Activated naive CD4-positive, alpha-beta T cell treated with anti-CD3 and anti-CD28 coated beads for 36 hours (primary cell): ENCODE measurements at regions of chr18 and their contacts with region 1.

Region 1: DNA sequence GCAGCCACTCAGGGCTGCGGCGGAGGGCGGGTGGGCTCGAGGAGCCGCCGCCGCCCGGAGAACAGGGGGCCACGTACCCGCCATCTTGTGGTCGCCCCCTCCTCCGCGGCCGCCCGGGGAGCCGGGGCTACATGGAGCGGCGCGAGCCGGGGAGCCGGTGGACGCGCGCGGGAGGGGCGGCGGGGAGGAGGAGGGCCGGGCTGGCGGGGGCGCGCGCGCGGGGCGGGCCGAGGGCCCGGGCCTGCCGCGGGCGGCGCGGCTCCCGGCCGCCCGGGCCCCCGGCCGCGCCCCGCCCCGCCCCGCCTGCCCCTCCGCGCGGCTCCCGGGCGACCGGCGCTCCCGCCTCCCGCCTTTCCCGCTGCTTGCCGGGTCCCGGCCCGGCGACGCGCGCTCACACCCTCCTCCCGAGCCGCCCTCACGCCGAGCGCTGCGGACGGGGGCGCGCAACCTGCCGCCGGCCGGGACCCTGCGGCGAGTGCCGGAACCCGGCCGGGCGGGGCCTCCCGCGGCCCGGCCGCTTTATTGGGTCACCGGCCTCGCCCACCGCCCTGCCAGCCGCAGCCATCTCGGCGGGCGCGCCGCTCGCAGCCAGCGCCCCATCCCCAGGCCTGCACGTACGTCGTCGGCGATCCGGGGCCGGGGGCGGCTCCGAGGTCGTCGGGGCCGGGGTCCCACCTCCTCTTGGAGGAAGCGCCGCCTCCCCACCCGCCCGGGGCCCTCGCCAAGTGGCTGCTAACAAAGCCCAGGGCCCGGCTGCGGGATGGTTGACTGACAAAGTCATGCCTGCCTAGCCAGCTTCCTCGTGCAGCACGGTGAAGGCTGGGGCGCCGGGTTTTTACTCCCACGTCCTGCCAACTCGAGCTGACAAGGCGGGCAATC is at the start of gene PPP4R1:
- DNase-seq: peak; percentile 71
- H3K4me3 Mint-ChIP-seq: peak within 1 kb of the TSS; percentile 93
- H3K27ac Mint-ChIP-seq: peak within 1 kb of the TSS; percentile 77
- H3K4me1 Mint-ChIP-seq: peaks cover 29% of the 10 kb centered on the region
- H3K27me3 Mint-ChIP-seq: no peaks in the 10 kb centered on the region
- total RNA-seq, gene PPP4R1: 23.0 to 23.6 TPM

Region 2: DNA sequence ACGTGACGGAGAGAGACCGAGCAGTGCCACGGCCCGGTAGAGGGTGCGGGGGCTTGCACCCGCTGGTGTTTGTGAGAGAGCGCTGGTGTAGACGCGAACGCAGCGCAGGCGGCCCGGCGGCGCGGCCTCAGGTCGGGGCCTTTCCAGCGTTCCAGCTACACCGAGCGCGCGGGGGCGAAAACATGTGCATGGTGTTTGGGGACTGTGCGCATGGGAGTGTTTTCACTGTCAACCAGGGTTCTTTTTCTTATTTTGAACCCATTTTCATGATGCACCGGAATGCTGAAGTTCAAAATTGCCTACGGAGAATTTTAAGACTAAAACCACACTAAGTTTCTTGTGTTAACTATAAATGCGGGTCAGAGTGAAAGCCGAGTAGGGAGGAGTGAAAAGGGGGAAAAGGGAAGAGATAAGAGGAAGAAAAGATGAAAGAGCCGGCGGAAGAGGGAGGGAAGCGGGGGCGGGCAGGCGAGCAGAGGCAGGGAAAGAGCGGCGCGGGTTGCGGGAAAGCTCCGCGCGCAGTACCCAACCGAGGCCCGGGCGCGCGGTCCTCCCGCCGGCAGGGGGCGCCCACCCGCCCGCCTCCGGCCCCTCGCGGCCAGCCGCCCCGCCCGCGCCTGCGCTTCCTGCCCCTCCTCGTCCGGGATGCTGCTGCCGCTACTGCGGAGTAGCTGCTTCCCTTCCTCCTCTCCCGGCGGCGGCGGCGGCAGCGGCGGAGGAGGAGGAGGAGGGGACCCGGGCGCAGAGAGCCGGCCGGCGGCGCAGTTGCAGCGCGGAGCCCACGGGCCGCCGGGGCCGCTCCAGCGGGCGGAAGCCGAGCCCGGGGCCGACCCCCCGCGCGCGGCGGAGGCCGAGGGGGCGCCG is 1005.6 kb before region 1 on chr18 and contains the start of gene RAB12:
- CTCF ChIA-PET with region 1: no interaction called
- intact Hi-C with region 1: loop called (anchors 5 kb)
- DNase-seq: peak; percentile 87
- H3K4me3 Mint-ChIP-seq: peak within 1 kb of the TSS; percentile 89
- H3K27ac Mint-ChIP-seq: peak within 1 kb of the TSS; percentile 91
- H3K4me1 Mint-ChIP-seq: peaks cover 47% of the 10 kb centered on the region
- H3K27me3 Mint-ChIP-seq: no peaks in the 10 kb centered on the region
- total RNA-seq, gene RAB12: 11.0 to 11.9 TPM

Region 3: GRCh38 chr18:9102508-9103375 is 511.9 kb before region 1 on chr18 and contains the start of gene NDUFV2:
- CTCF ChIA-PET with region 1: no interaction called
- intact Hi-C with region 1: loop called (anchors 5 kb)
- DNase-seq: peak; percentile 98
- H3K4me3 Mint-ChIP-seq: peak within 1 kb of the TSS; percentile 81
- H3K27ac Mint-ChIP-seq: peak within 1 kb of the TSS; percentile 95
- H3K4me1 Mint-ChIP-seq: peaks cover 43% of the 10 kb centered on the region
- H3K27me3 Mint-ChIP-seq: no peaks in the 10 kb centered on the region
- total RNA-seq, gene NDUFV2: 290 to 303 TPM

Region 4: GRCh38 chr18:9474983-9475642 is 139.5 kb before region 1 on chr18 and contains the start of gene RALBP1:
- CTCF ChIA-PET with region 1: no interaction called
- intact Hi-C with region 1: loop called (anchors 1 kb)
- DNase-seq: peak; percentile 99
- H3K4me3 Mint-ChIP-seq: peak within 1 kb of the TSS; percentile 89
- H3K27ac Mint-ChIP-seq: peak within 1 kb of the TSS; percentile 90
- H3K4me1 Mint-ChIP-seq: peaks cover 26% of the 10 kb centered on the region
- H3K27me3 Mint-ChIP-seq: peaks cover 3% of the 10 kb centered on the region
- total RNA-seq, gene RALBP1: 46.9 to 51.1 TPM

Region 5: DNA sequence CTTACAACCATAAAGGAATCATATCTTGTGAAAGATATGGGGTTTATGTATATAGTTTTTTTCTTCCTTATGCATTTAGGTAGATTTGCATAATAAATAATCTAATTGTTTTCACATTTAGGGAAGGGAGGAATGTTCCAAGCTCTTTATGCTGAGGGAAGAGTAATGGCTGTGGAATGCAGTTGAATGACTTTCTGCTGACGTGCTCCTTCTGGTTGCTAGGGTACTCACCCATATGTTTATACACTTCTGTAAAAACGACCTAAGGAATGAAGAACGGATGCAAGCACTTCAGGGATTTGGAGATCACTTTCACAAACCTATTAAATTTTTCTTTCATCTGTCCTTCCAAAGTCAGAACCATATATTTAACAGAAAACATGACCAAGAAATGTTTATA is 28.9 kb after region 1 on chr18:
- CTCF ChIA-PET with region 1: no interaction called
- intact Hi-C with region 1: no loop called
- DNase-seq: no peak
- H3K4me3 Mint-ChIP-seq: no peak overlapping the region
- H3K27ac Mint-ChIP-seq: no peak overlapping the region
- H3K4me1 Mint-ChIP-seq: no peaks in the 10 kb centered on the region
- H3K27me3 Mint-ChIP-seq: peaks cover 4% of the 10 kb centered on the region

Region 6: DNA sequence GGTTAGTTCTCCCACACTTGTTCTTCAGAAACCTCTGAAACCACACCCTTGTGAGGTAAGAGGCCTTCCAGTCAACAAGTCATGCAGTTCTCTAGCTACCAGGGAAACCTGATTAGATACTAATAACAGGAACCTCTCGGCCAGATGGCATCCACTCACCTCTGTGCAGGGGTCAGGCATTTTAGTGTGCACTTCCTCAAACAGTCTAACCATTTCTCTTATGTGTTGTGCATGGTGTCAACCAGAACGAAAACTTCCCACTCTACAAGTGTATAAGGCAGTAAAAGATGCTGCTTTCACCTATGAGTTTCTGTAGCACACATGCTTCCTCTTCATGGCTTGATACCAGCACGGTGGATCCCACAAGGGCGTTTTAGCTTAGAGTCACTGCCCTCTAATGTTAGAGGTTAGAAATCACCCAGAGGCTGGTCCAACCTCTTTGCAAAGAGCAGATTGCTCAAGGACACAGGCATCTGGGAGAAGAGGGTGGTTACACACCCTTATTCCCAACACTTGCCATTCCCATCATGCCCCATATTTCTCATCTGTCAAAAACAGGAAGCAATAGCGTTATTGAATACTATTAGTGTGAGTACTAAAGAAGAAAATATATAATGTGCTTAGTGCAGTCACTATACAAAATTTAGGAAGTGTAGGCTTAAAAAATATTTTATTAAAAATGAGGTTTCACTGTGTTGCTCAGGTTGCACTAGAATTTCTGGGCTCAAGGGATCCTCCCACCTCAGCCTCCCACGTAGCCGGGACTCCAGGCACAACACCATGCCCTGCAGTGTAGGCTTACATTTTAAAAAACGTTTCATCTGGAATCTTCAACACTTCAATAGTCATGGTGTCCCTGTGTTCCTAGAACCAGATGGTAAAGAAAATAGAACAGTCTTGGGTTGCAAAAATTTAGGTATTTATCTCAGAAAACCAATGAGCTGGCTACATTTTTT is 58.9 kb after region 1 on chr18:
- CTCF ChIA-PET with region 1: interaction called, 3 read pairs
- intact Hi-C with region 1: loop called (anchors 10 kb)
- DNase-seq: peak; percentile 42
- H3K4me3 Mint-ChIP-seq: no peak overlapping the region
- H3K27ac Mint-ChIP-seq: no peak overlapping the region
- H3K4me1 Mint-ChIP-seq: peaks cover 7% of the 10 kb centered on the region
- H3K27me3 Mint-ChIP-seq: peaks cover 7% of the 10 kb centered on the region

Region 7: DNA sequence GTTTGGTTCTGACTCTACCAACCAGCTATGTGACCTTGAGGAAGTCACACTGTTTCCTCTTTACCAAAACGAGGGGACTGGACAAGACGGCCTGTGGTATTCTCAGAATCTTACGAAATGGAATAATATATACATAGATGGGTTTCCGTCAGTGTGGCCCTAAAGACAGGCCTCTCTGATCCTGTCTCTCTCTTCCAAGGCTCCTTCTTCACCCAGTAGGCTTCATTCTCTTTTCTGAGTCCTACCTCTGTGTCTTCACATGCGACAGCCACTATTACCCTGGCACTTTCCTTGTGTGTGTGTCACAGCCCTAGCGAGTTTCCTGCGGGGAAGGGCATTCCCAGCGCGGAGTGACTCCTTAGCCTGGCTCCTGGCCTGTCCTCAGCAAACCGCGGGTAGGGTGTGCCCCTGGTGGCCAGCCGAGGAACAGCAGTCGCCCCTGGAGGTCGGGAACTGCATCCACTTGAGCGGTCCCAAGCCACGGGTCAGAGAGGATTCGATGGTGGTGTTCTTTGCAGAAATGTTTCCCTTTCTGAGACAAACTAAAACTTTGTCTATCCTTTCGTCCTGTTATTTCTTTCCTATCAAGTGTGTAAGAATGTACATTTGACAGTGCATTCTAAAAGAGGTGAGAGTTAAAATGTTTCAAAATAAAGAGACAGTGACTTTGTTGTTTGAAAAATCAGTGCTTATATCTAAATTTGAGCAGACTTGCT is 156.8 kb after region 1 on chr18:
- CTCF ChIA-PET with region 1: interaction called, 7 read pairs
- intact Hi-C with region 1: loop called (anchors 1 kb)
- DNase-seq: peak; percentile 73
- H3K4me3 Mint-ChIP-seq: no peak overlapping the region
- H3K27ac Mint-ChIP-seq: no peak overlapping the region
- H3K4me1 Mint-ChIP-seq: peaks cover 2% of the 10 kb centered on the region
- H3K27me3 Mint-ChIP-seq: peaks cover 26% of the 10 kb centered on the region

Region 8: DNA sequence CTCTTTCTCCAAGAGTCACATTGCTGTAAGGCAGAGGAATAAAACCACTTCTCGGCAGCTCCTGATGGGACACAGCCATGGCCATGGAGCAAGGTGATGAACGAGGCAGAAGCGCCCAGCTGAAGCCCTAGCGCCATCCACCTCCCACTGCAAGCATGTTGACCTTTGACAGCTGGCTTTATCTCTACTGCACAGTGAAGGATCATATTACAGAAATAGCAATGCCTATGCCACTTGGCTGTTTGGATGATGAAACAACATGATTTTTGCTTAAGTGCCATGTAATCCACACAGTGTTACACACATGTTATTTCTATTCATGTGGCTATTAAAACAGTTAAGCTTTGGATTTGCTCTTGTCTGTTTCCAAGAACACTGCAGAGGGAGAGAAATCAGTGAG is 466.9 kb after region 1 on chr18:
- CTCF ChIA-PET with region 1: no interaction called
- intact Hi-C with region 1: no loop called
- DNase-seq: no peak
- H3K4me3 Mint-ChIP-seq: no peak overlapping the region
- H3K27ac Mint-ChIP-seq: no peak overlapping the region
- H3K4me1 Mint-ChIP-seq: no peaks in the 10 kb centered on the region
- H3K27me3 Mint-ChIP-seq: no peaks in the 10 kb centered on the region